Esophagus muscularis mucosa (tissue), 4 donors: ENCODE measurements at regions of chr2 and their contacts with region 1.

Region 1: DNA sequence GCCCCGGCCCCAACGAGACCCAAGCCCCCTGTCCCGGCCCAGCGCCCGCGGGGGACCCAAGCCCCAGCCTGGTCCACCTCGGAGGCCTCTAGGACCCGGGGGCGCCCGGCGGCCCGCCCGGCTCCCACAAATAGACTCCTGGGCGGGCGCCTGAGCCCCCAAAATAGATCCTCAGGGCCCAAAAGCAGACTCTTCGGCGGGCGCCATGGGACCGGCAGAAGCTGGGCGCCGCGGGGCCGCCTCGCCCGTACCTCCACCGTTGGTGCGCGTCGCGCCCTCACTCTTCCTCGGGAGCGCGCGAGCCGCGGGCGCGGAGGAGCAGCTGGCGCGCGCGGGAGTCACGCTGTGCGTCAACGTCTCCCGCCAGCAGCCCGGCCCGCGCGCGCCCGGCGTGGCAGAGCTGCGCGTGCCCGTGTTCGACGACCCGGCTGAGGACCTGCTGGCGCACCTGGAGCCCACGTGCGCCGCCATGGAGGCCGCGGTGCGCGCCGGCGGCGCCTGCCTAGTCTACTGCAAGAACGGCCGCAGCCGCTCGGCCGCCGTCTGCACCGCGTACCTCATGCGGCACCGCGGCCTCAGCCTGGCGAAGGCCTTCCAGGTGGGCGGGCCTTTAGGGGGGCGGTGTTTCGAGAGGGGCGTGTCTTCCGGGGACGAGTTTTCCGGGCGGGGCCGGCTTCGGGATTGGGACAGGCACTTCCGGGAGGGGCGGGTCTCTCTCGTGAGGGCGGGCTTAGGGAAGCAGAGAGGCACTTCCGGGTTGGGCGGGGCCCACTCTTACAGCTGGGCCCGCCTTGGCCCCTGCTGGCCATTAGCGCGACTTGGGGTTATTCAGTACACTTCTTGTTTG is 546 bp downstream of the DUSP28 start:
- DNase-seq: peak; percentile 100
- H3K4me3 ChIP-seq: peak overlapping the region; percentile 73 to 90 (median 87)
- H3K27ac ChIP-seq: peak overlapping the region; percentile 98 to 100 (median 98)
- H3K4me1 ChIP-seq: peaks cover 53 to 70% (median 60%) of the 10 kb centered on the region in 4 donors
- H3K27me3 ChIP-seq: peaks cover 0 to 19% (median 0%) of the 10 kb centered on the region in 4 donors
- CTCF ChIP-seq: peak in 2 of 3 experiments; percentile 43 to 47
- EP300 ChIP-seq: no peak
- POLR2A ChIP-seq: peak; percentile 1

Region 2: DNA sequence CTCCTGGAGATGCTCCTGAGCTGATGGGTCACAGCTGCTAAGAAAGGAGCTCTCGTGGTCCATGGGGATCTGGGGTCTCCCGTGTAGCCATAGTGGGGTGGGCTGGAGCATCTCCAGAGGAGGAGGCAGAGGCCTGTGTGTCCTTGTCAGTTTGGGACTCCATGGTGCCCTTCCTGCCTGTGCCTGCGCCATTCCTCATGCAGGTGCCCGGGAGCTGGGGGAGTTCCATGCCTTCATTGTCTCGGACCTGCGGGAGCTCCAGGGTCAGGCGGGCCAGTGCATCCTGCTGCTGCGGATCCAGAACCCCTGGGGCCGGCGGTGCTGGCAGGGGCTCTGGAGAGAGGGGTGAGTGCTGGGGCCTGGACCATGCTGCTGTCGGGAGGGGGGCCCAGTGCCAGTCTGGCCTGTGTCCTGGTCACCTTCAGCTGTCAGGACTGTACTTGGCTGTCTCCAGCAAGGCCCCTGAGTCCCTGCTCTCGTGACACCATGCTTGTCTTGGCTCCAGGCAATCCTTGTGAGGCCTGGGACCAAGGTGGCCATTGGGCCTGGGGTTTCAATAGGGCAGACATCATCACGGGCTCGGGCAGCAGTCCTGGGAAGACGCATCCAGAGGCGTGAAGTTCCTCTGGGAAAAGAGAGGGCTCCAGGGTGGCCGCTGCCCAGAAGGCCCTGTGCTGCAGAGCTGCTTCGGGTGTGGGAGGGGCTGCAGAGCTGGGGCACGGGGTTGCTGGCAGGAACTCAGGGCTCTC is 33.2 kb after region 1 on chr2:
- intact Hi-C with region 1: loop called (anchors 5 kb)
- DNase-seq: no peak
- H3K4me3 ChIP-seq: no peak overlapping the region
- H3K27ac ChIP-seq: no peak overlapping the region
- H3K4me1 ChIP-seq: peaks cover 21 to 49% (median 42%) of the 10 kb centered on the region in 4 donors
- H3K27me3 ChIP-seq: no peaks in the 10 kb centered on the region
- CTCF ChIP-seq: no peak
- EP300 ChIP-seq: no peak
- POLR2A ChIP-seq: no peak